Right ventricle myocardium superior (tissue), 1 donor: ENCODE measurements at regions of chr1 and their contacts with region 1.

Region 1: GRCh38 chr1:204579681-204580080 is 63.5 kb downstream of the MDM4 start:
- DNase-seq: no peak
- ATAC-seq: no peak

Region 2: DNA sequence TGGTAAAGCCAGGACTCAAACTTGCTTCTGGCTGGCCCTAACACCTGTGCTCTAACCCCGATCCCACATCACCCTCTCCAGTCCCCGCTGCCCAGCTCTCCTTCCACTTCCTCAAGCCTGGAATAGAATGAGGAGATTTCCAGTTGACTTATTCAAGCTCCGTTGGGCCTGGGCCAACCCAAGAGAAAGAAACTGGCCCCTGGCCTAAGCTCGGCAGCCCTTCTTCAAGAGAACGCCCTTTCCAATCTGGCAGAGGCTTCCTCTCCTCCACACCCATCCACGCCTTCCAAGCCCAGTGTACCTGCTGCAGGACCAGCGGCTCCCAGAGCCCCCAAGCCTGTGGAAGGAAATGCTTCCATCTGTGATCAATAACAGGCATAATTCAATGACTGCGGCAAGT is 54.0 kb after region 1 on chr1:
- intact Hi-C with region 1: loop called (anchors 2 kb)
- DNase-seq: peak; percentile 62
- ATAC-seq: no peak